Activated naive CD4-positive, alpha-beta T cell treated with anti-CD3 and anti-CD28 coated beads for 36 hours (primary cell): ENCODE measurements at regions of chr1 and their contacts with region 1.

Region 1: DNA sequence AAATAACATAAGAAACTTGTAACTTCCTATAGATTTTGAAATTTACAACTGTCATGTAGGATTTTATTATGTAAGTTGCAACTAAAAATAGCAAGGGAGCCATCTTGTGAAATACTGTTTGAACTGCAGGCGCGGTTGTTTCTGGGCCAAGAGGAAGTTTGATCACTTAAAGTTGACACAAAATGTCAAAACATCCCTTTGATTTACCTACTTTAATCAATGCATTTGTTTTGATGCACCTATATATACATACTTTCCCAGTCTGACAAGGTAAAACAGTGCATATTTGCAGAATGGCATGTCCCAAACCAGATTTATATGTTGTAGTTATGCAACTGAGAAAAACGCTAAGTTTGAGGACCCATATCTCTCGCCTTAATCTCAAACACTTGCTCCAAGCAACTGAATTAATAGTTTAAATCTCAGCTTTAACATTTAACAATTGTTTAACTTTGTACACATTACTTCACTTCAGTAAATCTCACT is 63.8 kb downstream of the KCNK2 start:
- DNase-seq: peak; percentile 36
- H3K4me3 Mint-ChIP-seq: no peak overlapping the region
- H3K27ac Mint-ChIP-seq: no peak overlapping the region
- H3K4me1 Mint-ChIP-seq: peaks cover 3% of the 10 kb centered on the region
- H3K27me3 Mint-ChIP-seq: no peaks in the 10 kb centered on the region

Region 2: GRCh38 chr1:214632091-214632490 is 514.3 kb before region 1 on chr1:
- CTCF ChIA-PET with region 1: no interaction called
- intact Hi-C with region 1: loop called (anchors 2 kb)
- DNase-seq: no peak
- H3K4me3 Mint-ChIP-seq: no peak overlapping the region
- H3K27ac Mint-ChIP-seq: no peak overlapping the region
- H3K4me1 Mint-ChIP-seq: peaks cover 22% of the 10 kb centered on the region
- H3K27me3 Mint-ChIP-seq: no peaks in the 10 kb centered on the region

Region 3: GRCh38 chr1:214660862-214661261 is 485.5 kb before region 1 on chr1:
- CTCF ChIA-PET with region 1: no interaction called
- intact Hi-C with region 1: loop called (anchors 1 kb)
- DNase-seq: peak; percentile 36
- H3K4me3 Mint-ChIP-seq: no peak overlapping the region
- H3K27ac Mint-ChIP-seq: no peak overlapping the region
- H3K4me1 Mint-ChIP-seq: peaks cover 3% of the 10 kb centered on the region
- H3K27me3 Mint-ChIP-seq: no peaks in the 10 kb centered on the region

Region 4: GRCh38 chr1:215201283-215201682 is 54.9 kb after region 1 on chr1:
- CTCF ChIA-PET with region 1: no interaction called
- intact Hi-C with region 1: no loop called
- DNase-seq: no peak
- H3K4me3 Mint-ChIP-seq: no peak overlapping the region
- H3K27ac Mint-ChIP-seq: no peak overlapping the region
- H3K4me1 Mint-ChIP-seq: no peaks in the 10 kb centered on the region
- H3K27me3 Mint-ChIP-seq: peaks cover 4% of the 10 kb centered on the region

Region 5: DNA sequence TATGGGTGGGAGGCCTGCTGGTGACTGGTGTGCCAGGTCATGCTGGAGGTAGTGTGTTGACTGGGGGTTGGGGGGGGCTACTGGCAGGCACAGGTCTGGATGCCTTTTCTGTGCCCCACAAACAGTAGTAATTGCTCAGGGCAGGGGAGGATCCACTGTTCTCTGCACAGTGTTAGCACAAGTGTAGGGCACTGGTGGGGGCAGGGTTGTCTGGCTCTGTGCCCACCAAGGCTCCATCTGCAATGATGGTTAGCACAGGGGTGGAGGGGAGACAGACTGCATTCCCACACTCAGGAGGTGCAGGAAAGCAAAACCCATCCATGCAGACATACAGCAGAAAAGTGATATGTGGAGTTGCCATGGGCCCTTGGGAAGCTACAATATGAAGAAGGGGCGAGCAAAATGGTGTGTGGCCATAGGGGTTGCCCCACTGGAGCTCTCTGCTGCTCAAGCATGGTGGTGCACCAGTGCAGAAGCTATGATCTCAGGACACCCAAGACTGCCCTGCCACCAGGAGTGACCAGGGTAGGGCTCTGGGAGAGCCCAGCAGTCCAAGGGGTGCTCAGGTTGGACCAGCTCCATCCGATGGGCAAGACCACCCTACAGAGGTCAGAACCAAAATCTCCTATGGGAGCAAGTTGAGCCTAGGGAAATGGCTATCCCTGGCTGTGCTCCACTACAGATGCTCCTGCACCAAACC is 298.5 kb after region 1 on chr1:
- CTCF ChIA-PET with region 1: no interaction called
- intact Hi-C with region 1: no loop called
- DNase-seq: no peak
- H3K4me3 Mint-ChIP-seq: no peak overlapping the region
- H3K27ac Mint-ChIP-seq: no peak overlapping the region
- H3K4me1 Mint-ChIP-seq: no peaks in the 10 kb centered on the region
- H3K27me3 Mint-ChIP-seq: peaks cover 7% of the 10 kb centered on the region